Activated CD8-positive, alpha-beta T cell treated with anti-CD3 and anti-CD28 coated beads for 36 hours (primary cell): ENCODE measurements at regions of chr20 and their contacts with region 1.

Region 1: GRCh38 chr20:31723319-31724078 is 831 bp upstream of the BCL2L1 start:
- DNase-seq: peak; percentile 99
- ATAC-seq: peak; percentile 90
- H3K4me3 Mint-ChIP-seq: peak overlapping the region; percentile 97
- H3K27ac Mint-ChIP-seq: peak overlapping the region; percentile 97
- H3K4me1 Mint-ChIP-seq: peaks cover 4% of the 10 kb centered on the region
- H3K27me3 Mint-ChIP-seq: no peaks in the 10 kb centered on the region
- CTCF ChIP-seq: peak; percentile 94

Region 2: DNA sequence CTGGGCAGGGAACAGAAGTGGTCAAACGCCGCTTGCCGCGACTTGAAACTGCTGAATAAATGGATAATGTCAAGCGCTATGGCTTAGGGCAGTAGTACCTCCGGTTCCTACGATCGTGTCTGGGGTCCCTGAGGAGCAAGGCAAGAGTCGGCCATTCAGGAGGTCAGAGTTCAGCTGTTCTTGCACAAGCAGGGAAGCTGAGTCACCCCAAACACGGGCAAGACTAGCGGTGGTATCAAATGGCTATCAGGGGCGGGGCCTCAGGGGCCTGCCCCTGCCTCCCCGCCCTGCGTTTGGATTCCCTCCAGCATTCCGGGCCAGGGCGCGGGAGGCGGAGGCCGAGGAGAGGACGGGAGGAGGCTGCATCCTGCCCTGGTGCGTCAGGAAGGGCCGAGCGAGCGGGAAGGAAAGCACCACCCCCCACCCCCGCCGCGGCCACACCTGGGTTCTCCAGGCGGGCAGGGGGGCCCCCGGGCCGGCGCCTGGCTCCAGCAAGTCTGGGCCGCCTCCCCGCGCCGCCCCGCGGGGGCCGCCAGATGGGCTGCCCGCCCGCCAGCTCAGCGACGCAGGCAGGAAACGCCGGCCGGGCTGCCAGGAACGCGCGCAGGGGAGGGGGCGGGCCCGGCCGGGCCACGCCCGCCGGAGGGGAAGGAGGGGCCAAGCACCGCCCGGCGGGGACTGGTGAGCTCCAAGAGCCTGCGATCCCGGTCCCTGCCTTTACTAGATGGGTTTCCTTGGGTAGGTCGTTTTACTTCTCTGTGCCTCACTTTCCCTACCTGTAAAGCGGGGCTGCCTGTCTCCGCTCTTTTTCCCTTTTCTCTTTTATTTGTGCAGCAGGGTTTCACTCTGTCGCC is 150.6 kb before region 1 on chr20:
- CTCF ChIA-PET with region 1: interaction called, 24 read pairs
- POLR2A ChIA-PET with region 1: interaction called, 4 read pairs
- intact Hi-C with region 1: no loop called
- DNase-seq: peak; percentile 90
- ATAC-seq: peak; percentile 86
- H3K4me3 Mint-ChIP-seq: peak overlapping the region; percentile 84
- H3K27ac Mint-ChIP-seq: peak overlapping the region; percentile 78
- H3K4me1 Mint-ChIP-seq: peaks cover 37% of the 10 kb centered on the region
- H3K27me3 Mint-ChIP-seq: no peaks in the 10 kb centered on the region
- CTCF ChIP-seq: no peak

Region 3: GRCh38 chr20:31630187-31630790 is 93.2 kb before region 1 on chr20:
- CTCF ChIA-PET with region 1: interaction called, 110 read pairs
- POLR2A ChIA-PET with region 1: interaction called, 5 read pairs
- intact Hi-C with region 1: no loop called
- DNase-seq: peak; percentile 30
- ATAC-seq: peak; percentile 42
- H3K4me3 Mint-ChIP-seq: no peak overlapping the region
- H3K27ac Mint-ChIP-seq: no peak overlapping the region
- H3K4me1 Mint-ChIP-seq: peaks cover 5% of the 10 kb centered on the region
- H3K27me3 Mint-ChIP-seq: no peaks in the 10 kb centered on the region
- CTCF ChIP-seq: no peak

Region 4: GRCh38 chr20:31661625-31662371 is 61.7 kb before region 1 on chr20:
- CTCF ChIA-PET with region 1: interaction called, 333 read pairs
- POLR2A ChIA-PET with region 1: interaction called, 56 read pairs
- intact Hi-C with region 1: loop called (anchors 2 kb)
- DNase-seq: peak; percentile 86
- ATAC-seq: peak; percentile 75
- H3K4me3 Mint-ChIP-seq: peak overlapping the region; percentile 58
- H3K27ac Mint-ChIP-seq: peak overlapping the region; percentile 83
- H3K4me1 Mint-ChIP-seq: peaks cover 57% of the 10 kb centered on the region
- H3K27me3 Mint-ChIP-seq: no peaks in the 10 kb centered on the region
- CTCF ChIP-seq: peak; percentile 78

Region 5: DNA sequence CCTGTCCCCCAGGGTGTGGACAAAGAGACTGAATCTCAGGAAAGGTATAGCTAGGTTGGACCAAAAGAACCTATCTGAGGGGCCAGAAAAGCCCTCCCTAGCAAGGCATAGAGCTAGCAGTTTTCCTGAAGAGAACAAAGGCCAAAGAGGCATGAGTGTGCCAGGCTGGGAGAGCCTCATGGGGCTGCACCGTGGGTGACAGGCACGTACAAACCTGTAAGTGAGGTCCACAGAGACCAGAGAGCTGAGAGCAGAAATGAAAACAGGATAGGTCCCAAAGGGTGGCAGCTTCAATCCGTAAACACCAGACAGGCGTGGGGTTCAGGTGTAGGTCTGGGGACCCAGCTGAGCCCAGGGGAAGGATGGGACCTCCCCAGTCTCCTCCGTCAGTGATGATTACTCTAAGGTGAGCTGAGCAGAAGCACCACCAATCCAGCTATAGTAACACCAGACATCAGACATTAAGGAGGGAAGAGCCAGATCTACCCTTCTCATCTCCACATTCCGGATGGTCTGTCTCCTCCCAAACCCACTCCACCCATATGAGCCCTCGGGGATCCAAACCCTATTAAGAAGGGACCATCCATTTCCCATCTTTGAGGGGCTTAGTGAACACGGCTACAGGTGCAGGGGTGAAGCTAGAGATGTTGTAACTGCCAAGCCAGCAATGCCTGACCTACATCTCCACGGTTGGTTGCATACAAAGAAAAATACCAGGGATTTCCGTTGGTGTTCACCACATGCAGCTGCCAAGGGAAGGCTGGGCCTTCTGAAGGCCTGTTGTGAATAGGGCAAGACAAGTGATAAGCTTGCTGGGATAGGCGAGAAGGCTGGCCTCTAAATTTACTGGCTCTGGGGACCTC is 39.1 kb before region 1 on chr20:
- CTCF ChIA-PET with region 1: interaction called, 10 read pairs
- POLR2A ChIA-PET with region 1: interaction called, 7 read pairs
- intact Hi-C with region 1: no loop called
- DNase-seq: peak; percentile 40
- ATAC-seq: peak; percentile 59
- H3K4me3 Mint-ChIP-seq: no peak overlapping the region
- H3K27ac Mint-ChIP-seq: peak overlapping the region; percentile 81
- H3K4me1 Mint-ChIP-seq: peaks cover 79% of the 10 kb centered on the region
- H3K27me3 Mint-ChIP-seq: no peaks in the 10 kb centered on the region
- CTCF ChIP-seq: no peak

Region 6: GRCh38 chr20:31698803-31699718 is 24.4 kb before region 1 on chr20:
- CTCF ChIA-PET with region 1: interaction called, 38 read pairs
- POLR2A ChIA-PET with region 1: interaction called, 17 read pairs
- intact Hi-C with region 1: no loop called
- DNase-seq: peak; percentile 38
- ATAC-seq: peak; percentile 76
- H3K4me3 Mint-ChIP-seq: peak overlapping the region; percentile 24
- H3K27ac Mint-ChIP-seq: peak overlapping the region; percentile 65
- H3K4me1 Mint-ChIP-seq: peaks cover 70% of the 10 kb centered on the region
- H3K27me3 Mint-ChIP-seq: no peaks in the 10 kb centered on the region
- CTCF ChIP-seq: no peak

Region 7: DNA sequence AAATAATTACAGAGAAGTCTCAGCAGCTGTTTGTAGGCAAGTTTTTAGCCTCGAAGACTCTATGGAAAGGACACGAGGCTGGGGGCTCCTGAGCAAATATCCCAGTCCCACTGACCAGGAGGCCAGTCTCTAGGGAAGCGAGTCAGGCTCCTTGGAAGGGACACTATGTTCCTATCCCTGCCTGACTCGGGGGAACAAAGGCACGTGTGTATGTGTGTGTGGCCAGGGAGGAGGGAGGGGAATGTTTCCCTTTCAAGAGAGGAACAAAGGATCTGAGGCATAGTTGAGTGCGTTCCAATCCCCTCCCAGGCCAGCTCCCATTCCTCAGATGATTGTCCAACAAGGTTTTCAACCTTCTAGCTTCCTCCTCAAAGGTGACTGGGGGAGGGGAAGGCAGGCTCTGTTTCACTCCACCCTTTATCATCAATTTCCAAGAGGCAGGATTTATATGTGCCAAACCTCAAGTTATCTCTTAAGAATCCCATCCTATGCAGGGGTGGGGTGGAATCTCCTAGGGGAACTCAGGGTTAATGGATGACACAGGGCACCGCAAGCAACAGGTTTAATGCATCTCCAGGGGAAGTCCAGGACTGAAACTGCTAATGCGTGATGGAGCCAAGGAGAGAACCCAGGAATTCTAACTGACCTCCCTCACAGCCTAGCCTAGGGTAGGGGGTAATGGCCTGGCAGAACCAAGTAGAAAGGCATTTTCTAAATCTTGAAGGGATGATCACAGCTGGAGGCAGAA is 10.8 kb before region 1 on chr20:
- CTCF ChIA-PET with region 1: interaction called, 27 read pairs
- POLR2A ChIA-PET with region 1: interaction called, 27 read pairs
- intact Hi-C with region 1: no loop called
- DNase-seq: no peak
- ATAC-seq: no peak
- H3K4me3 Mint-ChIP-seq: peak overlapping the region; percentile 97
- H3K27ac Mint-ChIP-seq: peak overlapping the region; percentile 97
- H3K4me1 Mint-ChIP-seq: peaks cover 89% of the 10 kb centered on the region
- H3K27me3 Mint-ChIP-seq: no peaks in the 10 kb centered on the region
- CTCF ChIP-seq: no peak